ENCODE measurements at regions of chr12 and their contacts with region 1.

Region 1: DNA sequence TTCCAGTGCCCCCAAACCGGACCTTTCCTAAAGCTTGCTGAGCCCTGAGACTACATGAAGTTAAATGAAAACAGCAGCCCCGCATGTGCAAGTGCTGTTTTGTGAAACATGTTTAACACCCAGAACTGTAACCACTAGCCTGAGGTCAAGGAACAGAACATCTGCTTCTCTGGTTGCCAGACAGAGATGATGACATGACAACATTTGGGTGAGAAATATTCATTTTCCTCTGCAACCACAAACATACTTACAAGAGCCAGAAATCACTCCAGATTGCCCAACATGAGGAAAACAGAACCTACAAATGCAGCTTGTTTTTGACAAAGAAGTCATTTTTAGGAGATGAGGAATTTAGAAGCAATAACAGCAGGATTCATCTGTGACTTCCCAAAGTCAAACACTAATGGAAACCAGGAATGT is 110.4 kb downstream of the BCAT1 start:
- DNase-seq: peak; percentile 36
- H3K4me3 Mint-ChIP-seq: peak overlapping the region; percentile 54
- H3K27ac Mint-ChIP-seq: peak overlapping the region; percentile 90
- H3K4me1 Mint-ChIP-seq: peaks cover 59% of the 10 kb centered on the region
- H3K27me3 Mint-ChIP-seq: no peaks in the 10 kb centered on the region

Region 2: DNA sequence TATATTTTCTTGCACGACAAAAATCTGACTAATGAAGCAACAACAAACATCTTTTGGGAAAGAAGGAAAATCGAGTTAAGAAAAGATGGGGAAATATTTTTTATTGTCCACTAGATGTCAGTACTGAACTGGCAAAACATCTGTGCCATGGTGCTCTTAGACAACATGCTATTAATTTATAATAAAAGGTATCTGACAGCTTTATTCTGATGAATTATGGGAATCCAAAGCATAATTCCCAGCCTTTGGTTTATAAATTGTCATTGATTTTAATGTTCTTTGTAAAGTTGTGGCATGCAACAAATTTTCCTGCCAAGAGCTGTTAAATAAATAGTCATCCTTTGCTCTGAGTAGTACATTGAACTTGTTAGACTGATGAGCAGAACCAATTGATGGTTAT is 1982.4 kb before region 1 on chr12:
- intact Hi-C with region 1: loop called (anchors 2 kb)
- DNase-seq: no peak
- H3K4me3 Mint-ChIP-seq: no peak overlapping the region
- H3K27ac Mint-ChIP-seq: no peak overlapping the region
- H3K4me1 Mint-ChIP-seq: no peaks in the 10 kb centered on the region
- H3K27me3 Mint-ChIP-seq: peaks cover 2% of the 10 kb centered on the region

Region 3: GRCh38 chr12:24561882-24562760 is 276.4 kb before region 1 on chr12:
- intact Hi-C with region 1: loop called (anchors 1 kb)
- DNase-seq: no peak
- H3K4me3 Mint-ChIP-seq: peak overlapping the region; percentile 82
- H3K27ac Mint-ChIP-seq: peak overlapping the region; percentile 56
- H3K4me1 Mint-ChIP-seq: peaks cover 22% of the 10 kb centered on the region
- H3K27me3 Mint-ChIP-seq: peaks cover 64% of the 10 kb centered on the region

Region 4: DNA sequence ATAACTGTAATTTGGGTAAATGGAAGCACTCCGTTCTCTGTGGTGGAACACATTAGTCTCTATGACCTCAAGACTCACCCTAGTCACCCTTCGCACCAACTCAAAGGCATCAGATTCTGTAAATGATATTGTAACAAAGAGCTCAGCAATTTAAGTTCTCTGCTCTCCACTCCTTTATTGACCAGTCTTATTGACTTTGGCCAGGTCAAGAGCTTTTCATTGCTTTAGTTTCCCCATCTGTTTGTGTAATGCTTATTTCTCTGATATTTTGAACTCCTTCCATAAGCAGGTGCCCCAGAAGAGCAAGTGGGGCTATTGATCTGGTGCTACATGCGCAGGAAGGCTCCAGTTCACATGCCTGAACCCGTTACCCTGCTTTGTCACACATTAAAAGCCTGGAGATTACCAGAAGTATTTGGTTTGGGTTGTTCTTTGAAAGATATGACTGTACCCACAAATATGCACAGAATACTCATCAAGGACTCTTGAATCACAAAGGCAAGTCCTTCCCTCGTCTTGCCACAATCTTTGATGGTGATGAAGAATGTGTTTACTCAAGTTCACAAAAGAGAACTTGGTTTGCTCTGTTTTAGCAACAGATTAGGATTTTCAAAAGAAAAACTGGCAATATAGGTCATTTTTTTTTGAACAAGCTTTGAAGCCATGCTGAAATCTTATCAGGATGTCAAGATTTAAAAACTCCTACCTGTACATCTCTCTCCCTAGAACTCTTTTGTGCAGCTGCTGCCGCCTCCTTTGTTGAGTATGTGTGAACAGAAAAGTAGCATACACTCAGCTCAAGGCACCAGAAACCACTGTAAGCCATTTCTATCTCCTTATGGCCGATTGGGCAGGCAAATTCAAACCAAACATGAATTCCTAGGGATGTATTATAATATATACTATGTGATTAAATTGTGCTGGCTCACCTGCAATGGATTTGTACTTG is 83.6 kb before region 1 on chr12:
- intact Hi-C with region 1: loop called (anchors 1 kb)
- DNase-seq: no peak
- H3K4me3 Mint-ChIP-seq: peak overlapping the region; percentile 54
- H3K27ac Mint-ChIP-seq: peak overlapping the region; percentile 85
- H3K4me1 Mint-ChIP-seq: peaks cover 51% of the 10 kb centered on the region
- H3K27me3 Mint-ChIP-seq: no peaks in the 10 kb centered on the region

Region 5: GRCh38 chr12:24822121-24822899 is 16.2 kb before region 1 on chr12:
- intact Hi-C with region 1: loop called (anchors 1 kb)
- DNase-seq: no peak
- H3K4me3 Mint-ChIP-seq: peak overlapping the region; percentile 48
- H3K27ac Mint-ChIP-seq: peak overlapping the region; percentile 91
- H3K4me1 Mint-ChIP-seq: peaks cover 29% of the 10 kb centered on the region
- H3K27me3 Mint-ChIP-seq: no peaks in the 10 kb centered on the region

Region 6: GRCh38 chr12:24948757-24949722 is 110.5 kb after region 1 on chr12 and contains the start of gene BCAT1:
- intact Hi-C with region 1: loop called (anchors 1 kb)
- DNase-seq: peak; percentile 33
- H3K4me3 Mint-ChIP-seq: peak within 1 kb of the TSS; percentile 92
- H3K27ac Mint-ChIP-seq: peak within 1 kb of the TSS; percentile 96
- H3K4me1 Mint-ChIP-seq: peaks cover 55% of the 10 kb centered on the region
- H3K27me3 Mint-ChIP-seq: peaks cover 3% of the 10 kb centered on the region
- total RNA-seq, gene BCAT1: 37.3 and 42.0 TPM in 2 replicates

Region 7: GRCh38 chr12:25084816-25085215 is 246.3 kb after region 1 on chr12:
- intact Hi-C with region 1: no loop called
- DNase-seq: no peak
- H3K4me3 Mint-ChIP-seq: no peak overlapping the region
- H3K27ac Mint-ChIP-seq: no peak overlapping the region
- H3K4me1 Mint-ChIP-seq: peaks cover 8% of the 10 kb centered on the region
- H3K27me3 Mint-ChIP-seq: no peaks in the 10 kb centered on the region

Region 8: DNA sequence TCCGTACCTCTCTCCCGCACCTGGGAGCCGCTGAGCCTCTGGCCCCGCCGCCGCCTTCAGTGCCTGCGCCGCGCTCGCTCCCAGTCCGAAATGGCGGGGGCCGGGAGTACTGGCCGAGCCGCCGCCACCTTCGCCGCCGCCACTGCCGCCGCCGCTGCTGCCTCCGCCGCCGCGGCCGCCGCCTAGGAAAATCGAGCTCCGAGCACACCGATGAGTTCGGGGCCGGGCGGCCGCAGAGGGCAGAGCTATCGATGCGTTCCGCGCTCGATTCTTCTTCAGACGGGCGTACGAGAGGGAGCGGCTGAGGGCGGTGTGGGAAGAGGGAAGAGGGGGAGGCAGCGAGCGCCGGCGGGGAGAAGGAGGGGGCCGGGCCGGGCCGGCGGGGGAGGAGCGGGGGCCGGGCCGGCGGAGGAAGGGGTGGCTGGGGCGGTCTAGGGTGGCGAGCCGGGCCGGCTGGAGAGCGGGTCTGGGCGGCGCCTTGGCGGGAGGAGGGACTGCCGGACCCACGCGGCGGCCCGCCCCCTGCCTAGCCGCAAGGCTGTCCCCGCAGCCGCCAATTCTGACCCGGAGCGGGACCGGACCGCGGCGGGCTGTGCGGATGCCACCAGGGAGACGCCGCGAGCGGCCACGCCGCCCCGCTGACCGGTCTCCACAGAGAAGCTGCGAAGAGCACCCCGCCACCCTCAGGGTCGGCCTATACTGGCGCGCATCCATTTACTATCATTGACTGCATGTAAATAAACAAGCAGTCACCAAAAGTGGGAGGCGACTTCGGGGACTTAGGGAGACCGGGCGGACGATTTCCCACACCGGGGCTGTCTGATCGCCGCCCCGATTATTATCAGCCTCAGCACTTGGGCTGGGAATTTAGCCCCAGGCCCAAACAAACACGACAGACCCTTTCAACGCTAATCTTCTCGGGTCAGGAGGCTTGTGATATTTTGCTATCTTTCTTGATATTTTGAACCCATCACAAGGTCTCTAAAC is 412.5 kb after region 1 on chr12 and contains the start of gene KRAS:
- intact Hi-C with region 1: loop called (anchors 1 kb)
- DNase-seq: peak; percentile 89
- H3K4me3 Mint-ChIP-seq: peak within 1 kb of the TSS; percentile 90
- H3K27ac Mint-ChIP-seq: peak within 1 kb of the TSS; percentile 96
- H3K4me1 Mint-ChIP-seq: peaks cover 45% of the 10 kb centered on the region
- H3K27me3 Mint-ChIP-seq: peaks cover 10% of the 10 kb centered on the region
- total RNA-seq, gene KRAS: 43.1 and 43.3 TPM in 2 replicates

Region 9: DNA sequence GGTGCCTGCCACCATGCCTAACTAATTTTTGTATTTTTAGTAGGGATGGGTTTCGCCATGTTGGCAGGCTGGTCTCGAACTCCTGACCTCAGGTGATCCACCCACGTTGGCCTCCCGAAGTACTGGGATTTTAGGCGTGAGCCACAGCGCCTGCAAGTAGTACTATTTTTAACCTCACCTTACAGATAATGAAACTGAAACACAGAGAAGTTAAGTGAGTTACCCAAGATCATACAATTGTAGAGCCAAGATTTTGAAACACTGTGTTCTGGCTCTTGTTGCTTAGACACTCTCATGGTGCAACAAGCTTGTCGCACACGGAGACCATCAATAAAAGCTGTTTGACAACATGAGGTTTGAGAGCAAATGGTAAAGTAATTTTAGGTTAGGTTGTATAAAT is 873.6 kb after region 1 on chr12:
- intact Hi-C with region 1: no loop called
- DNase-seq: no peak
- H3K4me3 Mint-ChIP-seq: no peak overlapping the region
- H3K27ac Mint-ChIP-seq: no peak overlapping the region
- H3K4me1 Mint-ChIP-seq: no peaks in the 10 kb centered on the region
- H3K27me3 Mint-ChIP-seq: no peaks in the 10 kb centered on the region

Measured in activated T-helper 1 cell treated with anti-CD3 and anti-CD28 coated beads, Interleukin-12 subunit alpha, Interleukin-12 subunit beta, Interleukin-2, Interleukin-4 antibody, amounts not matched to agents 30 ng/mL and 10 ng/mL and 1 ng/mL, durations not matched to agents 14 hours and 24 hours and 36 hours (primary cell).